HepG2 (cell line): ENCODE measurements at regions of chr14 and their contacts with region 1.

Region 1: GRCh38 chr14:50542941-50543418 is 10.6 kb upstream of the MAP4K5 start:
- DNase-seq: peak; percentile 77
- ATAC-seq: peak; percentile 91
- H3K4me3 ChIP-seq: no peak overlapping the region; a peak in 1 of 6 replicates
- H3K27ac ChIP-seq: no peak overlapping the region
- H3K4me1 ChIP-seq: peaks cover 34% of the 10 kb centered on the region
- H3K27me3 ChIP-seq: no peaks in the 10 kb centered on the region; a peak in 1 of 5 replicates
- CTCF ChIP-seq: peak; percentile 78
- EP300 ChIP-seq: no peak
- POLR2A ChIP-seq: no peak
- RAD21 ChIP-seq: no peak

Region 2: GRCh38 chr14:50631408-50631821 is 88.4 kb after region 1 on chr14:
- CTCF ChIA-PET with region 1: no interaction called
- POLR2A ChIA-PET with region 1: no interaction called
- in situ Hi-C with region 1: no loop called
- intact Hi-C with region 1: no loop called
- DNase-seq: no peak
- ATAC-seq: no peak
- H3K4me3 ChIP-seq: no peak overlapping the region
- H3K27ac ChIP-seq: no peak overlapping the region
- H3K4me1 ChIP-seq: no peaks in the 10 kb centered on the region
- H3K27me3 ChIP-seq: no peaks in the 10 kb centered on the region
- CTCF ChIP-seq: no peak
- EP300 ChIP-seq: no peak
- POLR2A ChIP-seq: no peak
- RAD21 ChIP-seq: no peak

Region 3: DNA sequence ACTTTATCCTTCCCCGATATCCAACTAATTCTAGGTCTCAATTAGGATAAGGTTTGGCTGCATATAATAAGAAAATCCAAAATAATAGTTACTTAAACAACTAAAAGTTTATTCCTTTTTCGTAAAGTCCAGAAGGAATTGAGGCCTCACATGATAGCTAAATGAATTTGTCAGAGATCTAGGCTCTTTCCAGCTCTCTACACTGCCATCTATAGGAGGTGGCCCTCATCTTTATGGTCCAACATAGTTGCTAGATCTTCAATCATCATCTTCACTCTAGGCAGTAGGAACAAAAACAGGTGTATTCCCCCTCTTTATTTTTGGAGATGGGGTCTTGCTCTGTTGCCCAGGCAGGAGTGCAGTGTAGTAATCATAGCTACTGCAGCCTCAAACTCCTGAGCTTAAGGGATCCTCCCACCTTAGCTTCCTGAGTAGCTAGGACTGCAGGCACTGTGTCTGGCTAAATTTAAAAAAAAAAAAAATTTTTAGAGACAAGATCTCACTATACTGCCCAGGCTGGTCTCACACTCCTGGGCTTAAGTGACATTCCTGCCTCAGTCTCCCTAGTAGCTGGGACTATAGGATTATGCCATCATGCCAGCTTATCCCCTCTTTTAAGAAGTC is 171.6 kb after region 1 on chr14:
- CTCF ChIA-PET with region 1: no interaction called
- POLR2A ChIA-PET with region 1: no interaction called
- in situ Hi-C with region 1: no loop called
- intact Hi-C with region 1: loop called (anchors 1 kb)
- DNase-seq: peak; percentile 12
- ATAC-seq: peak; percentile 67
- H3K4me3 ChIP-seq: no peak overlapping the region
- H3K27ac ChIP-seq: no peak overlapping the region
- H3K4me1 ChIP-seq: no peaks in the 10 kb centered on the region
- H3K27me3 ChIP-seq: no peaks in the 10 kb centered on the region
- CTCF ChIP-seq: peak; percentile 53
- EP300 ChIP-seq: no peak
- POLR2A ChIP-seq: no peak
- RAD21 ChIP-seq: no peak

Region 4: GRCh38 chr14:50773632-50774541 is 230.9 kb after region 1 on chr14:
- CTCF ChIA-PET with region 1: interaction called, 16 read pairs
- POLR2A ChIA-PET with region 1: no interaction called
- in situ Hi-C with region 1: loop called (anchors 5 kb)
- intact Hi-C with region 1: loop called (anchors 1 kb)
- DNase-seq: peak; percentile 11
- ATAC-seq: peak; percentile 88
- H3K4me3 ChIP-seq: no peak overlapping the region
- H3K27ac ChIP-seq: no peak overlapping the region
- H3K4me1 ChIP-seq: no peaks in the 10 kb centered on the region
- H3K27me3 ChIP-seq: no peaks in the 10 kb centered on the region
- CTCF ChIP-seq: peak; percentile 83
- EP300 ChIP-seq: no peak
- POLR2A ChIP-seq: no peak
- RAD21 ChIP-seq: peak; percentile 64; the same call in 1 of the 2 replicates

Region 5: DNA sequence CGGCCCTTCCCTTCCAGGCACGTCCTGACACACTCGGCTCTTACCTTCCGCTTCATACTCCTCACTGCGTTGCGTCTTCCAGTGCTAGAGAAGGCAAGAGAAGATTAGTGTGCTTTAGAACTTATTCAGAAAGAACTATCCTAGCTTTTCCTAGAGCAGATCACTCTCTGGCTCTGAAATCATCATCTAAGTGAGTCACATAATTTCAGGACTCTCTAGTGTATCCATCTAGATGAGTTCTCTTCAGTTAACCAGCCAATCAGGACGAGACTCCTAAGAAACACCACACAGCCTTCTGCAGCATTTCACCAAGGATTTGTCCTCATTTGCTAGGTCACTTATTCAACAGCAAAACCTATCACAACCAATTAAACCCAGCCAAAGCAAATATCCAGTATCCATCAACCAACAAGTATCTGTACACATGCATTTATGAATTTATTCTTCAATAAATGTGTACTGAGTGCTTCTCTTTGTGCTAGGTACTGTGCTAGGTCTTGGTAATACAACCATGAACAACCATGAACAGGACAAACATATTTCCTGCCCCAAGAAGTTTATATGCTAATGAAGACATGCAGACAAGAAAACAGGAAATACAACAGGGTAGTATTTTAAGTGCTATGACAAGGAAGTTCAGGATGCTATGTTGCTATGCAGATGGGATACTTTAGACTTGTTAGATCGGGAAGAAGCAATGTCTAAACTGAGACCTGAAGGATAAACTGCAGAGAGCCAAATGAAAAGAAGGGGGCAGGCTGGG is 235.9 kb after region 1 on chr14:
- CTCF ChIA-PET with region 1: interaction called, 16 read pairs
- POLR2A ChIA-PET with region 1: no interaction called
- in situ Hi-C with region 1: loop called (anchors 5 kb)
- intact Hi-C with region 1: no loop called
- DNase-seq: no peak
- ATAC-seq: no peak
- H3K4me3 ChIP-seq: no peak overlapping the region
- H3K27ac ChIP-seq: no peak overlapping the region
- H3K4me1 ChIP-seq: no peaks in the 10 kb centered on the region
- H3K27me3 ChIP-seq: no peaks in the 10 kb centered on the region
- CTCF ChIP-seq: no peak
- EP300 ChIP-seq: no peak
- POLR2A ChIP-seq: no peak
- RAD21 ChIP-seq: no peak